ENCODE measurements at regions of chr1 and their contacts with region 1.

Region 1: GRCh38 chr1:12619792-12620487 is 1.9 kb upstream of the DHRS3 start:
- DNase-seq: peak; percentile 88 to 91 (median 89)
- ATAC-seq: peak; percentile 43 to 62 (median 54)
- H3K4me3 ChIP-seq: peak overlapping the region in 11 of 12 donors; percentile 63 to 97 (median 77)
- H3K27ac ChIP-seq: peak overlapping the region; percentile 91 to 98 (median 95)
- H3K4me1 ChIP-seq: peaks cover 0 to 60% (median 43%) of the 10 kb centered on the region in 12 donors
- H3K27me3 ChIP-seq: no peaks in the 10 kb centered on the region
- CTCF ChIP-seq: peak; percentile 91 to 99 (median 94)
- POLR2A ChIP-seq: no peak

Region 2: GRCh38 chr1:12344596-12345349 is 275.2 kb before region 1 on chr1:
- intact Hi-C with region 1: loop called in 1 of 10 experiments (anchors 5 kb)
- DNase-seq: peak in 3 of 5 donors; percentile 24 to 41 (median 38)
- ATAC-seq: peak; percentile 38 to 64 (median 50)
- H3K4me3 ChIP-seq: peak overlapping the region; percentile 7 to 48 (median 36)
- H3K27ac ChIP-seq: peak overlapping the region; percentile 15 to 87 (median 72)
- H3K4me1 ChIP-seq: peaks cover 11 to 88% (median 56%) of the 10 kb centered on the region in 12 donors
- H3K27me3 ChIP-seq: no peaks in the 10 kb centered on the region
- CTCF ChIP-seq: no peak
- POLR2A ChIP-seq: no peak

Region 3: GRCh38 chr1:12434174-12434573 is 185.8 kb before region 1 on chr1:
- intact Hi-C with region 1: loop called in 3 of 10 experiments (anchors 5 to 10 kb)
- DNase-seq: no peak
- ATAC-seq: peak; percentile 29 to 64 (median 48)
- H3K4me3 ChIP-seq: no peak overlapping the region
- H3K27ac ChIP-seq: peak overlapping the region; percentile 30 to 86 (median 75)
- H3K4me1 ChIP-seq: peaks cover 14 to 72% (median 45%) of the 10 kb centered on the region in 12 donors
- H3K27me3 ChIP-seq: no peaks in the 10 kb centered on the region
- CTCF ChIP-seq: no peak
- POLR2A ChIP-seq: no peak

Region 4: DNA sequence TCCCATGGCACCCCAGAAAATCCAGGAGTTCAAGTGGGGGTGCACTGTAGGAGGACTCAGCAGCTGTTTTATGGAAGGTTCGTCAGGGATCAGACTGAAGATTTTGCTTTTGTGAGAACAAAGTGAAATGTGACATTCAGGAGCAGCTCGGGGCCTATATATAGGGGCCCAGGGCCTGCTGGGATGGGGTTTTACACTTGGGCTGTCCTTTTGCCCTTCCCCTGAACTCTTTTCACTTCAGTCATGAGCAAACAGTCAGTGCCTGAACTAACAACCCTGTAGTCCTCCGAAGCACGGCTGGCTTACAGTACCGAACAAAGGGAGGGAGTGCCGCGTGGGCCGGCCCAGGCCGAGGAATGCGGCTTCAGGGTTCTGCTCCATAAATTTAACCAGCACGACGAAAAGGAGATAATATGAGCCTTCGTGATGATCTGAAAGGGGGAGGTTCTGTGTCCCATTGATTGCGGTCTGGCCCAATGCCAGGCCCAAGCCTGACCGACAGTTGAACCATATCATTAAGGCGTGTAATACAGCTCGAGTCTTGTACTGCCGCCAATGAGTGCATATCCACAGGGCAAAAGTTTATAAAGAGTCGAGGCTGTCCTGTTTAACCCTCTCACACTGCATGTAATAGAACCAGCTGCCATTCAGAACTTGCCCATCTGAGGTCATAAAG is 141.9 kb before region 1 on chr1:
- intact Hi-C with region 1: loop called in 5 of 10 experiments (anchors 5 to 10 kb)
- DNase-seq: peak; percentile 73 to 90 (median 78)
- ATAC-seq: peak; percentile 63 to 82 (median 76)
- H3K4me3 ChIP-seq: no peak overlapping the region
- H3K27ac ChIP-seq: peak overlapping the region; percentile 65 to 88 (median 80)
- H3K4me1 ChIP-seq: peaks cover 16 to 94% (median 79%) of the 10 kb centered on the region in 12 donors
- H3K27me3 ChIP-seq: no peaks in the 10 kb centered on the region
- CTCF ChIP-seq: no peak
- POLR2A ChIP-seq: no peak

Region 5: GRCh38 chr1:12539705-12540579 is 80.0 kb before region 1 on chr1:
- intact Hi-C with region 1: loop called in 2 of 10 experiments (anchors 5 kb)
- DNase-seq: peak; percentile 67 to 89 (median 78)
- ATAC-seq: peak; percentile 66 to 90 (median 84)
- H3K4me3 ChIP-seq: peak overlapping the region in 5 of 12 donors; percentile 3 to 31 (median 19)
- H3K27ac ChIP-seq: peak overlapping the region in 11 of 12 donors; percentile 10 to 83 (median 55)
- H3K4me1 ChIP-seq: peaks cover 0 to 37% (median 15%) of the 10 kb centered on the region in 12 donors
- H3K27me3 ChIP-seq: no peaks in the 10 kb centered on the region
- CTCF ChIP-seq: no peak
- POLR2A ChIP-seq: no peak

Region 6: DNA sequence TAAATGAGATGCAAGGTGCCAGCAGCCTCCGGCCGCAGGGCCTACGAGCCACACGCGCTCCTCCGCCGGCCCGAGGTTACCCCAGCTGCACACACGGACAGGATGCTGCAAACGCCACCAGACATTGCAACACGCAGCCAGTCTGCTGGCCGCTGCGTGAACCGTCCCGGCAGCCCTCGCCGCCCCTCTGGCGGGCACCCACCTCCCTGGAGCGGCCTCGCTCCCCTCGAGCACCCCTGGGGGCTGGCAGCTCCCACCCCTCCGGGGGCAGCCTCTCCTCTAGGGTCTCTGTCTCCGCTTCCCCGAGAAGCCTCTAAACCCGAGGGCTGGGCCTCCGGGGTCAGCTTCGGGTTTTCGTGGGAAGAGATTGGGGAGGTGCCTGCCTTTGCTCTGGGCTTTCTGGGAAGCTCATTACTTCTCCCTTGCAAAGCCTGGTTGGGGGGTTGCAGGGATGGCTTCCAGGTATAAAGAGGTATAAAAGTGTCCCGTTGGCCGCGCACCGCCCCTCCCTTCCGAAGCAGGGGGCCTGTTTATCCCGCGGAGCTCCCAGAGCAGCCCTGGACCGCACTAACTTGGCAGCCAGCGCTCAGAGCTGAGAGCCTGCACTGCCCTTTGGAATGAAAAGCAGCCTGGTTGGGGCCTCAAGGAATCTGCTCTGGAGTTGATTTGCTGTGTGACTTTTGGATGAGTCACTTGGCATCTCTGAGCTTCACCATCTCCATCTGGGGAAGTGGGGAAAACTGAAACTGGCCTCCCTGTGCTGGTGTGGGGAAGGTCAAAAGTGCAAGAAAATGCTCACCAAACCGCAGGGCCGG is 23.7 kb before region 1 on chr1:
- intact Hi-C with region 1: loop called in 4 of 10 experiments (anchors 1 to 2 kb)
- DNase-seq: peak; percentile 82 to 95 (median 92)
- ATAC-seq: peak; percentile 31 to 76 (median 73)
- H3K4me3 ChIP-seq: peak overlapping the region in 11 of 12 donors; percentile 14 to 56 (median 42)
- H3K27ac ChIP-seq: peak overlapping the region; percentile 84 to 99 (median 90)
- H3K4me1 ChIP-seq: peaks cover 14 to 100% (median 89%) of the 10 kb centered on the region in 12 donors
- H3K27me3 ChIP-seq: no peaks in the 10 kb centered on the region
- CTCF ChIP-seq: no peak
- POLR2A ChIP-seq: peak in 1 of 2 donors; percentile 17

Region 7: DNA sequence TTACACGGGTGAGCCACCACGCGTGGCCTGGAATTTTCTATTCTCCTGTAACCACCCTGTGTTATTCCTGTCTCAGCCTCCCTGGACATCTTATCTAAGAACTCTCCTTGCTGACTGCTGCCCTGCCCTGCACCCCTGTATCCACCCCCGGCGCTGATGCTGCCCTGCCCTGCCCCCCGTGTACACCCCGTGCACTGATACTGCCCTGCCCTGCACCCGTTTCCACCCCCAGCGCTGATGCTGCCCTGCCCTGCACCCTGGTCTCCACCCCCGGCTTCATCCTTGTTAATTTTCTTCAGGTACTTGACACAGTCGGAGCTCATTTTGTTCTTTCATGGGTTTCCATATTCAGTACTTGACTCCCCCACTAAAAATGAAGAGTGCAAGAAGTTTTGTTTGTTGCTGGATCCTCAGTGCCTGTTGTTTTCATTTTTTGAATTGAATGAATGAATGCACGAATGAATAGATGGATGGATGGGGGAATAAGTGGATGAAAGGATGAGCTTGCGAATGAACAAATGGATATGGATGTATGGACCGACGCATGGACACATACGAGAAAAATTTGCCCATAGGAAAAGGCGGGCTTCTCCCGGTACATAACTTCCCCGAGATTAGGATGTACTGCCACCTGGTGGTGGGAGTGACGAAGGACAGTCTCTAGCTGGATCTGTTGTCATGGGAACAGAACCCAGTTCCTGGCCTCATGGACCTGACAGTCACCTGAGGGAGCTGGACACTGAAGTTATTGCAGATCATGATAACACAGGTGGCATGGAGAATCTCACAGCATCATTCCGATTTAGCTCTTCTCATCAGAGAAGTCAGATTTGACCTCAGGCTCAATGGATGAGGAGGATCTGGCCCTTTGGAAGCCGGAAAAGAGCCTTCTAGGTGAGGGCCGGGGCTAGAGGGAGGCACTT is 38.9 kb after region 1 on chr1:
- intact Hi-C with region 1: loop called in 2 of 10 experiments (anchors 2 kb)
- DNase-seq: peak; percentile 60 to 73 (median 64)
- ATAC-seq: peak; percentile 65 to 88 (median 86)
- H3K4me3 ChIP-seq: no peak overlapping the region
- H3K27ac ChIP-seq: no peak overlapping the region
- H3K4me1 ChIP-seq: peaks cover 0 to 6% (median 1%) of the 10 kb centered on the region in 12 donors
- H3K27me3 ChIP-seq: no peaks in the 10 kb centered on the region
- CTCF ChIP-seq: peak; percentile 93 to 99 (median 96)
- POLR2A ChIP-seq: no peak